A549 (cell line): ENCODE measurements at regions of chr15 and their contacts with region 1.

Region 1: DNA sequence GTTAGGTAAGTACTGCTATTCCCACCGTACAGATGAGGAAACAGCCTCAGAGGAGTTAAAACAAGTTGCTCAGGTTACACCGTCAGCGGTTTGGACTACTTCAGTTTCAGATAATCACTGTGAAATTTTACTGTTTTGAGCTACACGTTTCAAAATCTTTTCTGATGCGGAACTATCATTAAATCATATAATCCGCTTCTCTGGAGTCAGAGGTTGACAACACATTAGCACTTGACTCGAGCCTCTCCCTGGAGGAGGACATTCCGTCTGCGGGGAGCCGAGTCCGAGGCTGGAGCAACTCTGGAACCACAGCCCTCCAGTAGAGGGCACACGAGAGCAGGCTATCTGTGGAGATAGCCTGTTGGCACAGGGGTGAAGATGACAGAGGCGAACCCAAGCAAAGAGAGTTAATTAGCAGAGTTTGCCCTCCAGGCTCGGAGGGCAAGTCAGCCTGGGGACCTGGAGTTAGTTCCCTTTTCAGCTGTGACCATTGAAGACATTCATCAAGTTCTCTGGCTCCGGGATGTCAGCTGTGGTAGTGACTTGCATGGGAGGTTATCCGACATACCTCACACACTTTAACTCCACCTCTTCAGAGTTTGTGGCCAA is 131.2 kb downstream of the IGF1R start:
- DNase-seq: peak; percentile 85 to 87
- ATAC-seq: peak; percentile 95
- H3K4me3 ChIP-seq: no peak overlapping the region
- H3K27ac ChIP-seq: peak overlapping the region; percentile 67 to 73
- H3K4me1 ChIP-seq: peaks cover 79% of the 10 kb centered on the region
- CTCF ChIP-seq: peak; percentile 97
- EP300 ChIP-seq: no peak
- POLR2A ChIP-seq: no peak
- RAD21 ChIP-seq: peak; percentile 95 to 97

Region 2: GRCh38 chr15:98689431-98689861 is 90.1 kb before region 1 on chr15:
- CTCF ChIA-PET with region 1: interaction called, 14 read pairs
- POLR2A ChIA-PET with region 1: no interaction called
- DNase-seq: no peak
- ATAC-seq: peak in 1 of 2 experiments; percentile 5; a peak in 1 of 6 replicates
- H3K4me3 ChIP-seq: no peak overlapping the region
- H3K27ac ChIP-seq: peak overlapping the region in 1 of 2 experiments; percentile 42; a peak in 2 of 6 replicates
- H3K4me1 ChIP-seq: peaks cover 94% of the 10 kb centered on the region
- CTCF ChIP-seq: no peak
- EP300 ChIP-seq: no peak
- POLR2A ChIP-seq: no peak
- RAD21 ChIP-seq: no peak

Region 3: DNA sequence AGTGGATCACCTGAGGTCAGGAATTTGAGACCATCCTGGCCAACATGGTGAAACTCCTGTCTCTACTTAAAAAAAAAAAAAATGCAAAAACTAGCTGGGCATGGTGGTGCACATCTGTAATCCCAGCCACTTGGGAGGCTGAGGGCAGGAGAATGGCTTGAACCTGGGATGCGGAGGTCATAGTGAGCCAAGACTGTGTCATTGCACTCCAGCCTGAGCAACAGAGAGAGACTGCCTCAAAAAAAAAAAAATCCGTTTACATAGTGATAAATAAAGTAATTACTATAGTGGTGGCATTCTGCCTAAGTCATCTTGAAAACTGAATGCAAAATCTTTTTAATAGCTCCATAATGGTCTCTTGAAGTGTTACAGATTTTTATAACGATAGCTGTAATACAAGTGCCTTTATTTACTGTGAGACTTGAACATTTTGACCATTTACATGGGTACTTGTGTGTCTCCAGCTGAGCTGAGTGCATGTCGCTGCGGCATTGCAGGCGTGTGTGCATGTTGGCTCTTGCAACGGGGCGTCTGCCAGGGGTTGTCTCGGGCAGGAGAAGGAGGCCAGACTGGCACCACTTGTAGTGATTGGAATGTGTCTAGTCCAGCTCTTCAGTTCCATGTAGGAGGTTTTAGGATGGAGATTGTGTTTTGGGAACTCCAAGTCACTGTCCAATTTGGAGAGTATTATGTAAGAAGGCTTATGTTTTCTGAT is 19.3 kb before region 1 on chr15:
- CTCF ChIA-PET with region 1: interaction called, 80 read pairs
- POLR2A ChIA-PET with region 1: no interaction called
- DNase-seq: no peak
- ATAC-seq: no peak
- H3K4me3 ChIP-seq: no peak overlapping the region
- H3K27ac ChIP-seq: no peak overlapping the region
- H3K4me1 ChIP-seq: peaks cover 67% of the 10 kb centered on the region
- CTCF ChIP-seq: no peak
- EP300 ChIP-seq: no peak
- POLR2A ChIP-seq: no peak
- RAD21 ChIP-seq: no peak

Region 4: DNA sequence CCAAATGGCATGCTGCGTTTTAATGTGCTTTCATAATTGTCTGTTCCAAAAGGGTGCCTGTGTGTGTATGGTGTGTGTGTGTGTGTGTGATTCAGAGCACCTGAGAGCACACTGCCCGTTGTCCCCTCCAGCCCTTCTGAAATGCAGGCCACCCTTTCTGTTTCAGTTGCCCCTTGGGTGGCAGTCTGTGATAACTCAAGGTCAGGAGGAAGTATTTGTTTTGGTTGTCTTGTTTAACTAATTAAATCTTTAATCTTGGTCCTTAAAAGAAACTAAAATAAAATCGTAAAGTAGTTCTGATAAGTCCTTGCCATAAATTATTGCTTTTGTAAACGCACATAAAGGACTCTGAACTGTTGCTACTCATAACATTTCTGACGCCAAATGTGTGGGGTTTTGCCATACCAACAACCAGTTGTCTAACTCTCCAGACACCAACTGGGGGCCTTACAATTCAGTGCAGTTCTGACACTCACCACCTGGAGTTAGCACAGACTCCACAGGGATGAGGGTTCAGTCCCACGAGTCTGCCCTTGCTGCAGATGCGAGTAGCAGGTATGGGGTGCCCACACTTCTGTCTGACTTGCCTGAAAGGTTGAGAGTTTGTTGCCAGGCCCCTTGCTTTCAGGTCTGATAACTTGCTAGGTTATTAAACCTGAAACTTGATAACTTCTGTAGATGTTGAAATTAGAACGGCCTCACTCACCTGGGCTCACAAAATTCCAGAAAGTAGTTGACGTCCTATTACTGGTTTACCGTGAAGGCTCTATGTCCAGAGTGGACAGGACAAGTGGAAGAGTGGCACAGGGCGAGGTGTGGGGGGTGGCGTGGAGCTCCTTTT is 26.1 kb after region 1 on chr15:
- CTCF ChIA-PET with region 1: interaction called, 172 read pairs
- POLR2A ChIA-PET with region 1: no interaction called
- DNase-seq: peak in 1 of 2 experiments; percentile 61
- ATAC-seq: peak; percentile 58 to 77; a peak in 5 of 6 replicates
- H3K4me3 ChIP-seq: no peak overlapping the region
- H3K27ac ChIP-seq: peak overlapping the region; percentile 29 to 66; a peak in 5 of 6 replicates
- H3K4me1 ChIP-seq: peaks cover 66% of the 10 kb centered on the region
- CTCF ChIP-seq: no peak
- EP300 ChIP-seq: no peak
- POLR2A ChIP-seq: no peak
- RAD21 ChIP-seq: no peak

Region 5: GRCh38 chr15:98850961-98851573 is 71.5 kb after region 1 on chr15:
- CTCF ChIA-PET with region 1: interaction called, 26 read pairs
- POLR2A ChIA-PET with region 1: no interaction called
- DNase-seq: peak; percentile 84 to 89
- ATAC-seq: peak; percentile 65 to 76
- H3K4me3 ChIP-seq: peak overlapping the region; percentile 47; the same call in 2 of the 3 replicates
- H3K27ac ChIP-seq: peak overlapping the region; percentile 95 to 97
- H3K4me1 ChIP-seq: peaks cover 86% of the 10 kb centered on the region
- CTCF ChIP-seq: peak; percentile 88
- EP300 ChIP-seq: peak; percentile 25 to 27; a peak in 2 of 5 replicates
- POLR2A ChIP-seq: no peak
- RAD21 ChIP-seq: peak; percentile 98

Region 6: DNA sequence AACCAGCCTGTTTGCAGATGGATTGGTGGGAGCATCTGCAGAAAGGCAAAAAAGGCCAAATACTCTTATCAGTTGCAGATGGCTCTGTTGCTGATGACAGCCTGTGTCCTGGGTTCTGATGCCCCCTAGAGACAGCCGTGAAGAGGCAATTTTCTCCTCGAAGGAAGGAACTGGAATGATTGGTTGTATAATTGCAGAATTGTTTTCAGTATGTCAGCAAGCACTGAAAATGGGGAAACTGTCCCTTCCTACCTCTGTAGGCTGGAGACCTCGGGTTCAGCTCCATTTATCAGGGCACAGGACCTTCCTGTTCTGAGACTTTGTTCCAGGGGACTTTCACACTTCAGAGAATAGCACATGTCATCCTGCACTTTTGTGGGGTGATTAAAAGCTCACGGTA is 125.0 kb after region 1 on chr15:
- CTCF ChIA-PET with region 1: interaction called, 26 read pairs
- POLR2A ChIA-PET with region 1: no interaction called
- DNase-seq: peak; percentile 85 to 89
- ATAC-seq: peak; percentile 77 to 79
- H3K4me3 ChIP-seq: no peak overlapping the region
- H3K27ac ChIP-seq: peak overlapping the region; percentile 94 to 97
- H3K4me1 ChIP-seq: peaks cover 85% of the 10 kb centered on the region
- CTCF ChIP-seq: peak; percentile 91
- EP300 ChIP-seq: no peak
- POLR2A ChIP-seq: no peak
- RAD21 ChIP-seq: peak; percentile 95 to 98

Region 7: GRCh38 chr15:99059010-99059981 is 279.7 kb after region 1 on chr15:
- CTCF ChIA-PET with region 1: interaction called, 11 read pairs
- POLR2A ChIA-PET with region 1: no interaction called
- DNase-seq: peak; percentile 78 to 84
- ATAC-seq: peak; percentile 80 to 86
- H3K4me3 ChIP-seq: peak overlapping the region; percentile 51
- H3K27ac ChIP-seq: peak overlapping the region; percentile 87 to 95
- H3K4me1 ChIP-seq: peaks cover 14% of the 10 kb centered on the region; the same call in 2 of the 3 replicates
- CTCF ChIP-seq: peak; percentile 85
- EP300 ChIP-seq: peak in 1 of 2 experiments; percentile 47; a peak in 1 of 5 replicates
- POLR2A ChIP-seq: peak; percentile 30
- RAD21 ChIP-seq: peak; percentile 72 to 95